T-cell (primary cell): ENCODE measurements at regions of chr7 and their contacts with region 1.

Region 1: DNA sequence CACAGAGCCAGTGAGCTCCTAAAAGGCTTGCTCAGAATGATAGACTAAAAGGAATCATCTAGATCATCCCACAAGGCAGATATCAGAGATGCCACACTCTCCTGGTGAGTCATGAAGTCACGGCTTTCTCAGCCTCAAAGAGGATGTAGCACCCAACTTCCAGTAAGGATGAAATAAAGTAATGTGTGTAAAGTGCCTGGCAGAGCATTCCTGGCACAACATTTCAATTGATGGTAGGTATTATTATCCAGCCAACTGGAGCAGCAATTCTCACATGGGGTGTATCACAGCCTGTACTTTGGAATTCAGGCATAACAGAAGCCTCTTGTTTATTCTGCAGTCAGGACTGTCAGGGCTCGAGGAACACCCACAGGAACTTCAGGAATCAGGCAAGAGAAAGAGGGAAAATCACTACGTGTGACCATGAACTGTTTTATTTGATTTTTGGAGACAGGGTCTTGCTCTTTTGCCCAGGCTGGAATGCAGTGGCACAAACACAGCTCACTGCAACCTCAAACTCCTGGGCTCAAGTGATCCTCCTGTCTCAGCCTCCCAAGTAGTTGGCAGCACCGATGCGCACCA is 5.3 kb upstream of the NAT16 start:
- DNase-seq: no peak
- ATAC-seq: no peak
- H3K4me3 ChIP-seq: no peak overlapping the region
- H3K4me3 Mint-ChIP-seq: no peak overlapping the region
- H3K27ac ChIP-seq: no peak overlapping the region
- H3K27ac Mint-ChIP-seq: no peak overlapping the region
- H3K4me1 ChIP-seq: no peaks in the 10 kb centered on the region
- H3K4me1 Mint-ChIP-seq: peaks cover 4 to 11% (median 4%) of the 10 kb centered on the region in 3 donors
- H3K27me3 ChIP-seq: peaks cover 7 to 49% of the 10 kb centered on the region in 2 experiments
- H3K27me3 Mint-ChIP-seq: peaks cover 27 to 30% of the 10 kb centered on the region in 2 donors

Region 2: DNA sequence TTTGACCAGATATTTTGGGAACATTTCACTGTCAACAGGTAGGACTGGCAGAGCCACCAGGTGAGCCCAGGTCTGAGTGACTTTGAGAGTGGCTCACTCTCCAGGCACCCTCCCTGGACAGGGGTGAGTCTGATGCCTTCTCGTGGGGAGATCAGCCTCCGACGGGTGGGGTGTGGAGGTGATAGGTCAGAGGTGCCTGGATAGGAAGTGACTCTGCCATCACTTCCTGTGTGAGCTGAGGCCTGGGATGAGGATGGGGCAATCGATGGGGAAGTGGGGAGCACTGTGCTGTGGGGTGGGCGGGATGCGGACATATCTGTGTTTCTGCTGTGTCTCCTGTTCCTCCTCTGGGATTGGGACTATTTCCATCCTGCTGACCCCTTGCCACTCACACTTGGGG is 101.7 kb after region 1 on chr7:
- CTCF ChIA-PET with region 1: interaction called in 1 of 2 experiments, 10 read pairs
- POLR2A ChIA-PET with region 1: no interaction called
- DNase-seq: no peak
- ATAC-seq: no peak
- H3K4me3 ChIP-seq: no peak overlapping the region
- H3K4me3 Mint-ChIP-seq: no peak overlapping the region
- H3K27ac ChIP-seq: no peak overlapping the region
- H3K27ac Mint-ChIP-seq: no peak overlapping the region
- H3K4me1 ChIP-seq: peaks cover 0 to 15% of the 10 kb centered on the region in 2 experiments
- H3K4me1 Mint-ChIP-seq: peaks cover 11 to 21% (median 20%) of the 10 kb centered on the region in 3 donors
- H3K27me3 ChIP-seq: peaks cover 0 to 26% of the 10 kb centered on the region in 2 experiments
- H3K27me3 Mint-ChIP-seq: peaks cover 14 to 21% of the 10 kb centered on the region in 2 donors